Ovary (tissue), 10 donors: ENCODE measurements at regions of chr3 and their contacts with region 1.

Region 1: GRCh38 chr3:4504340-4505261 is 11.5 kb downstream of the ITPR1 start:
- DNase-seq: peak in 3 of 5 donors; percentile 27 to 52 (median 35)
- H3K4me3 ChIP-seq: peak overlapping the region; percentile 17
- H3K27ac ChIP-seq: peak overlapping the region in 1 of 2 donors; percentile 65
- H3K4me1 ChIP-seq: peaks cover 33% of the 10 kb centered on the region
- H3K27me3 ChIP-seq: no peaks in the 10 kb centered on the region
- CTCF ChIP-seq: no peak
- EP300 ChIP-seq: no peak
- POLR2A ChIP-seq: no peak

Region 2: GRCh38 chr3:4528819-4529600 is 24.4 kb after region 1 on chr3:
- intact Hi-C with region 1: loop called in 1 of 4 experiments (anchors 1 kb)
- DNase-seq: no peak
- H3K4me3 ChIP-seq: no peak overlapping the region
- H3K27ac ChIP-seq: no peak overlapping the region
- H3K4me1 ChIP-seq: peaks cover 21% of the 10 kb centered on the region
- H3K27me3 ChIP-seq: no peaks in the 10 kb centered on the region
- CTCF ChIP-seq: no peak
- EP300 ChIP-seq: no peak
- POLR2A ChIP-seq: no peak

Region 3: DNA sequence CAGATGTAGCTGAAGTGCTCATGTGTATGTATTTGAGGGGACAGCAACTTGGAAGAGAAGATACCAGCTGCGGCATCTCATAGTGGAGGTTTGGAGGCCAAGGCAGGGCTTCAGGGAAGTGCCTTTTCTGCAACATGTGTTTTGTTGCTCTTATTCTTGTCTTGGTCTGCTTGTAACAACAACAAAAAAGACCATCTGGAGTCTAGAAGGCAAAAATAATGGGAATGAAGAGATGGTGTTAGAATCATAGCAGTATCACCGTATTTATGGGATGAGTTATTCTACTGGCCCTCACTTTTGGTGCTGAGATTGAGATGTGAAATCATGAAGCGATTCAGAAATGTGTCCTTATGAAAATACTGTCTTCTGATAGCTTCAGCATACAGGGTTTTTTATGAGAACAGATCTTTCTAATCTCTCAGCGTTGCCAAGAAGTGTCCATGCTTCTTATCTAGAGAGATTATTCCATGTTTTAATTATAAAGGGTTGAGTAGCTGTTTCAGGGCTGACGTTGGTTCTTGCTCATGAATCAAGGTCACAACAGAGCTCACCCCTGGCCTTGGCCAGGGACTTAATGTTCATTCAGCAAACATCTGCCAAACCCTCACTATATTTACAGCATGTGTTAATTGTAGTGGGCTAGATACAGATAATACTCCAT is 46.6 kb after region 1 on chr3:
- intact Hi-C with region 1: loop called in 1 of 4 experiments (anchors 5 kb)
- DNase-seq: peak; percentile 58 to 79 (median 70)
- H3K4me3 ChIP-seq: no peak overlapping the region
- H3K27ac ChIP-seq: peak overlapping the region; percentile 25 to 64
- H3K4me1 ChIP-seq: peaks cover 33% of the 10 kb centered on the region
- H3K27me3 ChIP-seq: no peaks in the 10 kb centered on the region
- CTCF ChIP-seq: no peak
- EP300 ChIP-seq: no peak
- POLR2A ChIP-seq: no peak